Lower leg skin (tissue), 4 donors: ENCODE measurements at regions of chr11 and their contacts with region 1.

Region 1: DNA sequence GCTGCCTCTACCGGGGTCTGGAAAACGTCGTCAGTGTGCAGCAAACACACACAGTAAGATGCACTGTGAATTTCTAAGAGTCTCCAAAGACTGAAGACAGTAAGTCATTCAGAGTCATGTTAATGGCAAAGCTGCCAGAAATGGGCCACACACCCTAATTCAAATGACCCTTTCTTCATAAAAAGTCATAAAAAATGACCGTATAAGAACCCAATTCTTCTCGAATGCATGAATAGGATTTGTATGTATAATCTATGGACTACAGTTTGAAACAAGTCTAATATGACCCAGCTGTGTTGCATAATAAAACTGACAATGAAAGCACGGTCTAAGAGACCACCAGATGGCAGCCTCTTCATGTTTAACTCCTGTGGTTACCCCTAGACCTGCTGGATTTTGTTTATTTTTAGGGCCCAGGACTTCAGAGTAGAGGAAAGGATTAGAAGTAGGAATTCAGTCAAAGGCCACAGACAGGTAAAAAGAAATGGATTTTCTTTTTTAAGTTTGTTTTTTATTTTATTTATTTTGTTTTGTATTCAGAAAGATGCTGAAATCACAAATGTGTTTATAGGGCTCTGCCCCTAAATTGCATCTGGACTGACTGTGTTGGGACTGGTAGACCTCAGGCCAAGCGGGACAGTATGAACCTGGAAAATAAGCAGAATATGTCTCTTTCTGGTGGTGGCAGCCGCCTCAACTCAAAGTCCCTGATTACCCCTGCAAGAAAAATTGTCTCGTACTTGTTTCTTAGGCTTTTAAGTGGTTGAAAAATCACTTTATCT is 32.1 kb upstream of the SLC5A12 start:
- DNase-seq: peak in 1 of 2 donors; percentile 54
- H3K4me3 ChIP-seq: no peak overlapping the region
- CTCF ChIP-seq: peak in 1 of 3 donors; percentile 59
- POLR2A ChIP-seq: no peak

Region 2: DNA sequence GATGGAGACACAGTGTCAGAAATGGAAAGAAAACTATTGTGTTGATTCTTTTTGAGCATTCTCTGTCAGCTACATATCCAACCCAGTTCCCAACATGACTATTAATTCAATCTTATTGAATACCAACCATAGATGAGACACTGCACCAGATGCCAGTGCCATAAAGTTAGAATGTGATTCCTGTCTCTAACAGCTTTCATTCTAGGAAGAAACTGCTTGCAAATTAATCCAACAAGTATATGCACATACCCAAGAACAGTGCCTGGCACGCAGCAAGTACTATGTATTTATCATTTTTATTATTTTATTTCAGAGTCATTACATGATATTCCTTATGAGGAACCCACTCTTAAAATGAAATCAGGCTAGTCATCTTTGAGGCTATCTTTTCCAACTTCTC is 66.6 kb before region 1 on chr11:
- intact Hi-C with region 1: no loop called
- DNase-seq: no peak
- H3K4me3 ChIP-seq: no peak overlapping the region
- CTCF ChIP-seq: no peak
- POLR2A ChIP-seq: no peak

Region 3: GRCh38 chr11:27124514-27125264 is 370.8 kb after region 1 on chr11:
- intact Hi-C with region 1: loop called (anchors 10 kb)
- DNase-seq: no peak
- H3K4me3 ChIP-seq: no peak overlapping the region
- CTCF ChIP-seq: no peak
- POLR2A ChIP-seq: no peak

Region 4: GRCh38 chr11:27228232-27228905 is 474.5 kb after region 1 on chr11:
- intact Hi-C with region 1: no loop called
- DNase-seq: no peak
- H3K4me3 ChIP-seq: no peak overlapping the region
- CTCF ChIP-seq: no peak
- POLR2A ChIP-seq: no peak